Colonic mucosa (tissue), 4 donors: ENCODE measurements at regions of chr1 and their contacts with region 1.

Region 1: DNA sequence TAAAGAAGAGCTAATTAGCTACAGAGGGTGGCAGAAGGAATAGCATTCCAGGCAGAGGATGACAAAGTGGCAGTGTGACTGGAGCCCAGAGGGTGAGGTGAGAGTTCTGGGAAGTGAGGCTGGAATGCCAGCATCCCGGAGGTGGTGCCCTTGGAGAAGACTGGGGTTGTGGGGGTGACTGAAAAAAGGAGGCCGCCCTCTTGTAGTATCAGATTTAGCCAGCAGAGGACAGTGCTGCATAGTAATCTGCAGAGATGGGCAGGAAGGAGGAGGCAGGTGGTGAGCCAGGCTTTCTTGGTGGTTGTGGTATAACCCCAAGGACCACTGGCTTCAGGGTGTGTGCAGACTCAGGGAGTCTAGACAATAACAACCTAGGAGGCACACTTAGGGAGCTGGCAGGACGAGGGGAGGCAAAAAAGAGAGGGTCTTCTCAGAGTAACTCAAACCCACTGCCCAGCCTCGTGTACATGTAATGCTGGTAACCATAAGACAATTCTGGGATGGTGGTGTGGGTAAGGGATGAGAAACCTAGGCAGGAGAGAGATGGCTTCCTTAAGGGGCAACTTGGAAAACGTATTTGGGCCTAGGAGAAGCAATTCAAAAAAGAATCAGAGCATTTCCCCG is 30.5 kb downstream of the MROH7 start:
- DNase-seq: peak; percentile 75
- H3K4me3 ChIP-seq: no peak overlapping the region
- H3K27ac ChIP-seq: no peak overlapping the region
- H3K4me1 ChIP-seq: no peaks in the 10 kb centered on the region
- H3K27me3 ChIP-seq: no peaks in the 10 kb centered on the region
- CTCF ChIP-seq: peak; percentile 77

Region 2: DNA sequence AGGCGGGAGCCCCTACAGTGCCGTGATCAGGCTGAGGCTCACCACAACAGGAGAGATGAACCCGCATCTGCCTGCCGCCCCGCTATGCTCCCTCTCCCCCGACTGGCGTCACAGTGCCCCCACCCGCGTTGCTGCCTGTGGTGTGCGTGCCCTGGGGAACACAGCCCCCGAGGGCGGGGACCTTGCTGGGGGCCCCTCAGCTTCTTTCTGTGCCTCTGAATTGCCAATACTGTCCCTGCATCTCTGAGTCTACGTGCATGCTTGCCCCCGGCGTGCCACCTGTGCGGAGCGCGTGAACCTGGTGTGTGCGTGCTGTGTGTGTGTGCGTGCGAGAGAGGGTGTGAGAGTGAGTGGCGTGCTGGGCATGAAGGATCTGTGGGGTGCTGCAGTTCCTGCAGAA is 81.9 kb after region 1 on chr1:
- intact Hi-C with region 1: no loop called
- DNase-seq: no peak
- H3K4me3 ChIP-seq: no peak overlapping the region
- H3K27ac ChIP-seq: no peak overlapping the region
- H3K4me1 ChIP-seq: no peaks in the 10 kb centered on the region
- H3K27me3 ChIP-seq: no peaks in the 10 kb centered on the region
- CTCF ChIP-seq: no peak

Region 3: DNA sequence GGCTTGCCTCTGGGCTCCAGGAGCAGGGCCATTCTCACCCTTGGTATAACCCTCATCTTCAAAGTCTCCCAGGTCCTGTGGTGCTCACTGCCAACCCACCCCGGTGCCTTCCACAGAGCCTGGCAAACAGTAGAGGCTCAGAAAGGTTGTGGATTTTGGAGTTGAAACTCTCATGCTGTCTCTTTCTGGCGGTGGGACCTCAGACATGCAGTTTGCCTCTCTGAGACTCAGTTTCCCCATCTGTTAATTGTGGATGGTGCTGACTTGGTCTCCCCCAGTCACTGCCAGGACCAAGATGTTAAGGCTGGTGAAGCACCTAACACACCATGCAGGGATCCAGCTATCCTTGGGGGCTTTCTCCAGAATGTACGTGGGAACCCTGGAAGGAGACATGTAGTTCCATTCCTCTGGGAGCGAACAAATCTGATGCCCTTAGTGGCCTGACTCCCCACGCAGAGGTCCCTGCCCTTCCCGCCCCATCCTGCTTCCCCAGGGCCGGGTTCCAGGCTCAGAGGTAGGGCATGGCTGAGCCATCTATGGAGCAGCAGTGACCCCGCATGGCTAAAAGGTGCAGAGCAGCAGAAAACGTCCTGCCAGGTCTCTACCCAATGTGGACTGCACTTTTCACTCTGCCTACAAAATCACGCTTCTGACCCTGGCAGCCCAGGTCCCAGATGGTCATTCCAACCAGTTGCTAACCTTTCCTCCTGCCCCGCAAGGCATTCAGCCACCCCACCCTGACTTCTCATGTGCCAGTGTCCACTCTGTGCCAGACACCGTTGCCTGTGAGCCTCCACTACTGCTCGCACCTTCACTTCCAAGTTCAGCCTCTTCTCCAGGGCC is 138.2 kb after region 1 on chr1:
- intact Hi-C with region 1: loop called (anchors 5 kb)
- DNase-seq: peak; percentile 82
- H3K4me3 ChIP-seq: no peak overlapping the region
- H3K27ac ChIP-seq: no peak overlapping the region
- H3K4me1 ChIP-seq: no peaks in the 10 kb centered on the region
- H3K27me3 ChIP-seq: no peaks in the 10 kb centered on the region
- CTCF ChIP-seq: peak; percentile 76